IMR-90 (cell line): ENCODE measurements at regions of chr12 and their contacts with region 1.

Region 1: DNA sequence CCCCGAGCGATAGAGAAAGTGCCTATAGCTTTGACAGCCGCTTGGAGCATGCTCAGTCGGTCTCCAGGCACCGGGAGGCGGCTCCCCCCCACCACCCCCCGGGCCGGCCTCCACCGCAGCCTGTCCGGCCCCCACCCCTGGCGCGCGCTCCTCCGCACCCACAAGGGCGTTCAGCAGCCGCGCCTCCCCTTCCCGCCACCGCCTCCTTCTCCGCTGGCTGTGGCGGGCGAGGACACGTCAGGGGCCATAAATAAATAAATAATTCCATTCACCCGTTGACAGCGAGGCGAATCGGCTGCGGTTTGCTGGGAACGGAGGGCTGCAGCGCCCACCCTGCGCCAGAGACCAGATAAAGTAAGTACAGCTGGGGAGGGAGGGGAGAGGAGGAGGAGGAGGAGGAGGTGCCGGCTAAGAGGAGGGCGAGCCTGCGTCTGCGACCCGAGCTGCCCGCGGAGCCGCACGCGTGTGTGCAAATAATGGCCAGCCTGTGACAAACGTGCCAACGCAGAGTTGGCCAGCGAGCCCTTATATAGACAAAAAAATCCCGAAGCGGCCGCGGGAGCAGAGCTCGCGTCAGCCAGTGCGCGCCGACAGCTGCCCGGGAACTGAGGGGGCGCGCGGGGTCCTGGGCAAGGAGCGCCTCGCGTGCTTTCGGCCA is at the start of gene SLC16A7:
- DNase-seq: peak; percentile 86
- ATAC-seq: peak; percentile 82
- H3K4me3 ChIP-seq: peak within 1 kb of the TSS; percentile 87
- H3K27ac ChIP-seq: peak within 1 kb of the TSS; percentile 97
- H3K4me1 ChIP-seq: no peaks in the 10 kb centered on the region
- H3K27me3 ChIP-seq: no peaks in the 10 kb centered on the region
- CTCF ChIP-seq: no peak; the same call in 1 of the 2 replicates
- POLR2A ChIP-seq: peak; percentile 52
- RAD21 ChIP-seq: no peak
- total RNA-seq, gene SLC16A7: 21.5 and 30.0 TPM in 2 replicates

Region 2: DNA sequence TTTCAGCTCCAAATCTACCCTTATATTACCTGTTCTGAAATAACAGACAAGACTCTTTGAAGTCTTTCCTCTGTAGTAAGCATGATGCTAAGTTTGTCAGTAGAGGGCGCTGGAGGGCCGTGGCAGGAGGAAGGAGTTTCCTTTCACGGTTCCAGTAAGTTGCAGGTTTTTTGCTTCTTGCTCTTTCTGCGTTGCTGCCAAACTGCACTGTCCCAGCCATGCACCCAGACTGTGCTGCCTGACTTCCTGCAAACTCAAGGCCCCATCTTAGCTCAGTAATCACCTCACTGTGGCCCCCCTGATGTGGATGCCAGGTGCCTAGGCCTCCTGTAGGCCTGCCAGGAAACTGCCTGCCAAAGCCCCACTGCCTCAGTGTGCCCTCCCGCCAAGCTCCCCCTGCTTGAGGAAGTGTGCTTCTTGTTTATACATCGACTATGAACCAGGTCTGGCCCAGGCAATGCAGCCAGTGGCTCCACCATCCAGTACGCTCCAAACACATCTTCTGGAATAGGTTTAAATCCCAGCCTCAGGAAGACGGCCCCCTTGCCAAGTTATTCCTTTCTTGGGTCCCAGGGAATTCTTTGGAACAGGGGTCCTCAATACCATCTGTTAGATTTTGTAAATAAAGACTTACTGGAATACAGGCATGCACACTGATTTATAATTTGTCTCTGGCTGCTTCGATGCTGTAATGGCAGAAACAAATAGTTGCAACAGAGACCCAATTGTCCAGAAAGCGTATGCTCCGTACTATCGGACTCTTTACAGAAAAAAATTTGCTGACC is 482.0 kb before region 1 on chr12:
- CTCF ChIA-PET with region 1: no interaction called
- POLR2A ChIA-PET with region 1: no interaction called
- dilution Hi-C with region 1: no loop called
- in situ Hi-C with region 1: no loop called
- intact Hi-C with region 1: loop called (anchors 5 kb)
- DNase-seq: peak; percentile 81
- ATAC-seq: peak; percentile 90
- H3K4me3 ChIP-seq: no peak overlapping the region
- H3K27ac ChIP-seq: no peak overlapping the region
- H3K4me1 ChIP-seq: peaks cover 2% of the 10 kb centered on the region; the same call in 1 of the 2 replicates
- H3K27me3 ChIP-seq: no peaks in the 10 kb centered on the region
- CTCF ChIP-seq: peak; percentile 93
- POLR2A ChIP-seq: no peak
- RAD21 ChIP-seq: peak; percentile 90

Region 3: DNA sequence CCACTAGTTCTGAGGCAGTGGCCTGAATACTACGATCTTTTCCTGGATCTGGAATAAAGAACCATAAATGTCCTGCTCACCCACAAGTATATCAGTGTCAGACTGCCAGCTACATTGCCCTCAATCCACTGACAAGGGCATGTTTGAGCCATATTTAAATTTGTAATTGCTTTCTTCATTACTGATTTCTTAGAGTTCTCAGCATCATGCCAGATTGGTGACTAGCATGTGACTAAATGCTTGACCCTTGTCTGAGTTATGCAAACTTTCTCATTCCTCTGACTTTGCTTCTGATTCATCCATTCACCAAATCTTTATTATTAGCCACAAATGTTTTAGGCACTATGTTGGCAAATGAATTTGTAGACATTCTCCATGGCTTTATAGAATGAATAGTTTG is 143.8 kb before region 1 on chr12:
- CTCF ChIA-PET with region 1: no interaction called
- POLR2A ChIA-PET with region 1: no interaction called
- dilution Hi-C with region 1: no loop called
- in situ Hi-C with region 1: no loop called
- intact Hi-C with region 1: loop called (anchors 5 kb)
- DNase-seq: peak; percentile 85
- ATAC-seq: peak; percentile 94
- H3K4me3 ChIP-seq: no peak overlapping the region
- H3K27ac ChIP-seq: no peak overlapping the region
- H3K4me1 ChIP-seq: peaks cover 4% of the 10 kb centered on the region; the same call in 1 of the 2 replicates
- H3K27me3 ChIP-seq: no peaks in the 10 kb centered on the region
- CTCF ChIP-seq: no peak
- POLR2A ChIP-seq: no peak
- RAD21 ChIP-seq: no peak

Region 4: DNA sequence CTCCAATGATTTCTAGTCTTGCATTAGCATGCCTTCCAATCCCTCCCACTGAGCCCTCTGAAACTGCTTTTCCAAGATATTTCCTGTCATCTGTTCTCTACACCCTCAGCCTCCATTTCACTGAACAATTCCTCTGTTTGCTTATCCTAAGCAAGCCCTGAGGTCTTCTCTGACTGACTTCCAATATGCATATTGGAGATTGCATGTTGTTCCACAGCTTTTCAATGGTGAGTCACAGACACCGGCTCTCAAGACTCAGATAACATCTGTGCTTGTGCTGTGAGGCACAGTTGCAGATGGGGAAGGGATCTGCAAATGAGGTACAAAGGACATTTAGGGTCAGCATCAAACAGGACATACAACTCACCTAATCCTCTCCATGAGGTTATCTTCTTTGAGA is 140.8 kb after region 1 on chr12:
- CTCF ChIA-PET with region 1: no interaction called
- POLR2A ChIA-PET with region 1: no interaction called
- dilution Hi-C with region 1: no loop called
- in situ Hi-C with region 1: no loop called
- intact Hi-C with region 1: loop called (anchors 2 kb)
- DNase-seq: peak; percentile 96
- ATAC-seq: peak; percentile 89
- H3K4me3 ChIP-seq: no peak overlapping the region
- H3K27ac ChIP-seq: no peak overlapping the region
- H3K4me1 ChIP-seq: peaks cover 3% of the 10 kb centered on the region
- H3K27me3 ChIP-seq: no peaks in the 10 kb centered on the region
- CTCF ChIP-seq: no peak
- POLR2A ChIP-seq: no peak
- RAD21 ChIP-seq: no peak

Region 5: GRCh38 chr12:60148109-60148508 is 552.1 kb after region 1 on chr12:
- CTCF ChIA-PET with region 1: no interaction called
- POLR2A ChIA-PET with region 1: no interaction called
- dilution Hi-C with region 1: no loop called
- in situ Hi-C with region 1: no loop called
- intact Hi-C with region 1: loop called (anchors 1 kb)
- DNase-seq: peak; percentile 92
- ATAC-seq: peak; percentile 78
- H3K4me3 ChIP-seq: no peak overlapping the region
- H3K27ac ChIP-seq: peak overlapping the region; percentile 76
- H3K4me1 ChIP-seq: peaks cover 2% of the 10 kb centered on the region
- H3K27me3 ChIP-seq: no peaks in the 10 kb centered on the region
- CTCF ChIP-seq: no peak
- POLR2A ChIP-seq: no peak
- RAD21 ChIP-seq: no peak